Activated naive CD4-positive, alpha-beta T cell treated with anti-CD3 and anti-CD28 coated beads for 36 hours (primary cell): ENCODE measurements at regions of chr2 and their contacts with region 1.

Region 1: GRCh38 chr2:204005940-204006721 is 69.6 kb downstream of the ICOS start:
- DNase-seq: peak; percentile 40
- H3K4me3 Mint-ChIP-seq: no peak overlapping the region
- H3K27ac Mint-ChIP-seq: peak overlapping the region; percentile 96
- H3K4me1 Mint-ChIP-seq: peaks cover 95% of the 10 kb centered on the region
- H3K27me3 Mint-ChIP-seq: no peaks in the 10 kb centered on the region

Region 2: DNA sequence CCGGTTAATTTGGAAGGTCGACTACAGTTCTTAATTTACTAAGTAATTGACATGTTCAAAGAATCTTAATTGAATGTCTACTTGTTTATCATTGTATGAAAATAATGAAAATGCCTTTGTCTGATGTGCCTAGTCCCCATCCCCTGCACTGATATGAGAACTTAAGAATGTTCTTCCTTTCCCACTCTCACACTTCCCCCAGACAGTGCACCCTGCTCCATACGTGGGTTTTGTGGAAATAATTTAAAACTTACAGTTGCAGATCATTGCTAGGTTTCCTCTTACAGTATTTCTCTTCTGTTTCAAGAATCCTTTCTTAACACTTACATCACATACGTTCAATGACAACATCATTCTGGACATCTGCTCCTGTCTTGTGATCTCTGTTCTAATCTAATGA is 66.1 kb before region 1 on chr2:
- CTCF ChIA-PET with region 1: no interaction called
- intact Hi-C with region 1: loop called (anchors 1 kb)
- DNase-seq: no peak
- H3K4me3 Mint-ChIP-seq: peak overlapping the region; percentile 92
- H3K27ac Mint-ChIP-seq: peak overlapping the region; percentile 96
- H3K4me1 Mint-ChIP-seq: peaks cover 54% of the 10 kb centered on the region
- H3K27me3 Mint-ChIP-seq: no peaks in the 10 kb centered on the region